GM12878 (cell line): ENCODE measurements at regions of chr4 and their contacts with region 1.

Region 1: DNA sequence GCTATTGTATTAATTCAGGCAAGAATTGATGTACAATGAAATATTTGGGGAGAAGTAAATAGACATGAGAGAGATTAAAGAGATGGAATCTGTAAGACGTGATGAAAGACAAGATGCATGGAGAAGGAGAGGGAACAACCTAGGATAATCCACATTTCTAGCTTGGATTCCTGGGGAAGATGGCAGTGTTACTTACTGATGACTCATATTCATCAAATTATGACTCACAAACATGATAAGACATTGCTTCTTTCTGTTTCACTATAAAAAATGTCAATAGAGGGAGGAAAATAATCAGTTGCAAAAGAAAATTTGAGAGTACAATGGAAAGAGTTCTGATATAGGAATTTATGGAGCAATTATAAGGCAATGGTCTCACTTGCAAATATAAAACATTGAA is 104.1 kb upstream of the BMP3 start:
- DNase-seq: no peak
- ATAC-seq: peak; percentile 68
- H3K4me3 ChIP-seq: no peak overlapping the region
- H3K27ac ChIP-seq: no peak overlapping the region
- H3K4me1 ChIP-seq: no peaks in the 10 kb centered on the region
- H3K27me3 ChIP-seq: no peaks in the 10 kb centered on the region
- CTCF ChIP-seq: no peak
- EP300 ChIP-seq: no peak
- POLR2A ChIP-seq: no peak
- RAD21 ChIP-seq: no peak

Region 2: DNA sequence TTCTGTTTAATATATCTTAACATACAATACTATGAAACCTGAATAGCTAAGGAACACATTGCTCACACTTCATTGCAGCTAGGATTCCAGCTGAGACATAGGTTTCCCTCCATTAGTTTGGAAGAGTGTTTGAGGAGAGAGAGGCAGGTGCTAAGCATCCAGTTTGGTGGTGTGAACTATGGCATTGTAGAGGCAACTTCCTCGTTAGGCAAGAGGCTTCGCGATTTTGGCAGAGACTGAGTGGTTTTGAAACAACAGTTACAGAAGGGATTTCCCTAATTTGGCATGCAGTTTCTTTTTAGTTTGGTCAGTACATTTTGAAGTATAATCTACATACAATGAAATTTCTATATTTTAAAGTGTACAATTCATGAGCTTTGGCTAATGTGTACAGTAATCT is 13.1 kb before region 1 on chr4:
- CTCF ChIA-PET with region 1: interaction called, 8 read pairs
- POLR2A ChIA-PET with region 1: interaction called, 3 read pairs
- RAD21 ChIA-PET with region 1: interaction called, 4 read pairs
- SMC1A ChIA-PET with region 1: interaction called, 18 read pairs
- in situ Hi-C with region 1: no loop called
- intact Hi-C with region 1: no loop called
- DNase-seq: peak; percentile 35
- ATAC-seq: peak; percentile 91
- H3K4me3 ChIP-seq: no peak overlapping the region
- H3K27ac ChIP-seq: no peak overlapping the region
- H3K4me1 ChIP-seq: no peaks in the 10 kb centered on the region
- H3K27me3 ChIP-seq: no peaks in the 10 kb centered on the region
- CTCF ChIP-seq: no peak
- EP300 ChIP-seq: no peak
- POLR2A ChIP-seq: no peak
- RAD21 ChIP-seq: no peak